PC-9 (cell line): ENCODE measurements at regions of chrX and their contacts with region 1.

Region 1: DNA sequence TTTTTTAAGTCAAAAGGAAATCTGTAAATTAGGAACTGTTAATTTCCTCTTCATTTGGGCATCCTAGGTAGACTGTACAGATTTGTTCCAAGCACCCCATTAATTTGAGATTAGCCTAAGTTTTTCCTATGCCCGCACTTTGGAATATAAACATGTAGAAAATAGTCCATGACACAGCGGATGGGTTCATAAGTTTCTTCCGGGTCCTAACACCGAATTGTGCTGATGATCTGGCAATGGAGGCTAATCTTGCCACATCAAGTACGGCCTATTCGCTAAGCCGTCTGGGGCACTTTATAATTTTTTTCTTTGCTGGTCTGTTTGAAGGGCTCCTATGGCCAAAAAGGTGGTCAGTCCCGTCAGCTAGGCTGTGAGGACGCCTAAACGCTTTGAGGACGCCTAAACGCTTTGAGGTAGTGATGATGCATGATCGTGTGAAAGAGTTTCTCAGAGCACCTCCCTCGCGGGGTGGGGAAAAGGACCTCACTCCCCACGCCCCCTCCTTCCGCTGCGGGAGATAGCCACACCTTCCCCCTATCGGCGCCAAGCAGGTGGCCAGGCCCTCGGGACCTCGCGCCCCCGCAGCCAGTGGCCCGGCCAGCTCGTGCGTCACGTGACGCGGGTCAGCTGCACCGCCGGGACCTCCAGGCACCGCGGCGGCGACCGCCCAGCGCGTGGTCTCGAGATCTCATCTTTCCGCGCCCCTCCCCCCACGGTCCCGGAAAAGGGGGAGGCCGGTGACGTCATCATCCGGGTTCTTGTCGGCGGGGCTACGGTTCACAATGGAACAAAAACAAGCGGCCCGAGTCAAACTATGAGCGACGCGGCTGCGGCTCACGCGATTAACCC is 977 bp upstream of the USP9X start:
- DNase-seq: peak; percentile 76 to 89
- H3K4me3 ChIP-seq: peak overlapping the region; percentile 62
- H3K27ac ChIP-seq: peak overlapping the region; percentile 92
- H3K4me1 ChIP-seq: 0 out of 2 replicates have a peak, but pooled peaks cover 6% of the 10 kb centered on the region
- H3K27me3 ChIP-seq: no peaks in the 10 kb centered on the region
- CTCF ChIP-seq: no peak

Region 2: GRCh38 chrX:40772290-40772689 is 312.0 kb before region 1 on chrX:
- CTCF ChIA-PET with region 1: no interaction called
- POLR2A ChIA-PET with region 1: interaction called, 13 read pairs
- intact Hi-C with region 1: no loop called
- DNase-seq: peak in 1 of 2 experiments; percentile 54
- H3K4me3 ChIP-seq: no peak overlapping the region
- H3K27ac ChIP-seq: no peak overlapping the region
- H3K4me1 ChIP-seq: no peaks in the 10 kb centered on the region; the same call in 1 of the 2 replicates
- H3K27me3 ChIP-seq: no peaks in the 10 kb centered on the region
- CTCF ChIP-seq: no peak

Region 3: DNA sequence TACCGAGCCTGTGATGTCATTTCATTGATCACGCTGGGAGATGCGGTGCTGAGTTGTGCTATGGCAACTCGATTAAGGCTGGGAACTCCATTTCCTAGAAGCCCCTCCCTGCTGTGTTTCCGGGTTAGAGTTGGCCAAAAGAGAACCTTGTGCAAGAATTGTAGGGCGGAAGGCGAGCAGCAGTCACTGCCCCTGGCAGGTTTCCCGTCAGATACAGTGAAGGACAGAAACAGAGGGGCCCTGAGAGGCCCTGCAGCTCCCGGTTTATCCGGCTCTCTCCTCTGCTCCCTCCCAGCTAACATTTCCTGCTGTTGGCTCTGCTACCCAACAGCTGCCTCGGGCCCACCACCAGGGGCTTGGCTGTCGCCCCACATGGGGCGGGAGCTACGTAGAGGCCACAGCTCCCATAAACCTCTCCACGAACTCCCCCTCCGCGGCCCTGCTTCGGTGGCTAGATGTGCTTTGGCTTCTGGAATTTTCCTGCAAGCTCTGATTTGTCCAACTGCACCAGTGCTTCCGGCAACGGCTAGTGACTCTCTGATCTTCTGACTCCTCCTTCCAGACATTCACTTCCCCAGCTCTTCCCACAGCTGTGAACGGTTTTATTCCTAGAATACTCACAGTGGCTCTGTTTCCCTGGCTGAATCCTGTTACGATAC is 74.0 kb before region 1 on chrX:
- CTCF ChIA-PET with region 1: no interaction called
- POLR2A ChIA-PET with region 1: no interaction called
- intact Hi-C with region 1: loop called (anchors 1 kb)
- DNase-seq: peak; percentile 58 to 80
- H3K4me3 ChIP-seq: peak overlapping the region; percentile 36; the same call in 1 of the 2 replicates
- H3K27ac ChIP-seq: peak overlapping the region; percentile 81
- H3K4me1 ChIP-seq: 0 out of 2 replicates have a peak, but pooled peaks cover 6% of the 10 kb centered on the region
- H3K27me3 ChIP-seq: no peaks in the 10 kb centered on the region
- CTCF ChIP-seq: no peak

Region 4: DNA sequence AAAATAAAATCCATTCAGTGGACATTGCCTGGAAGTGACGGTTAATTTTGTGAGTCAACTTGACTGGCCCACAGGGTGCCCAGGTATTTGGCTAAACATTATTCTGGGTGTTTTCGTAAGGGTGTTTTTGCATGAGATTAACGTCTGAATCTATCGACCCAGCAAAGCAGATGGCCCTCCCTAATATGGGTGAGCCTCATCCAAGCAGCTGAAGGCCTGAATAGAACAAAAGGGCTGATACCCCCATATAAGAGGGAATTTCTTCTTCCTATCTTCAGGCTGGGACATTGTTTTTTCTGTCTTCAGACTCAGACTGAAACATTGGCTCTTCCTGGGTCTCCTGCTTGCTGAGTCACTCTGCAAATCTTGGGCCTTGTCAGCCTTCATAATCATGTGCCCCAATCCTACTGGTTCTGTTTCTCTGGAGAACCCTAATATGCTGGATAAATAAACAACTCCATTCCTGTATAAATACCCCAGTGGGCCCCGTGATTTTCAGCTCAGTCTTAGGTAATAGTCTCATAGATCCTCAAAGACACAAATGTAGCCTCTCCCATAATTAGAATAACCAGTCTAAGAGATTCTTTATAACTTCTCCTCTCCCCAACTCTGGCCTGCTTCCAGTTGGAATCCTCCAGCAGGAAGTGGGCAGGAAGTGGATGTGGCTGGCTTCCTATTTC is 216.6 kb after region 1 on chrX:
- CTCF ChIA-PET with region 1: no interaction called
- POLR2A ChIA-PET with region 1: interaction called, 11 read pairs
- intact Hi-C with region 1: no loop called
- DNase-seq: peak in 1 of 2 experiments; percentile 38
- H3K4me3 ChIP-seq: no peak overlapping the region
- H3K27ac ChIP-seq: peak overlapping the region; percentile 64
- H3K4me1 ChIP-seq: peaks cover 19% of the 10 kb centered on the region; the same call in 1 of the 2 replicates
- H3K27me3 ChIP-seq: no peaks in the 10 kb centered on the region
- CTCF ChIP-seq: no peak

Region 5: GRCh38 chrX:41822892-41823291 is 738.6 kb after region 1 on chrX:
- CTCF ChIA-PET with region 1: no interaction called
- POLR2A ChIA-PET with region 1: no interaction called
- intact Hi-C with region 1: no loop called
- DNase-seq: no peak
- H3K4me3 ChIP-seq: no peak overlapping the region
- H3K27ac ChIP-seq: no peak overlapping the region
- H3K4me1 ChIP-seq: no peaks in the 10 kb centered on the region
- H3K27me3 ChIP-seq: no peaks in the 10 kb centered on the region
- CTCF ChIP-seq: no peak